PC-9 (cell line): ENCODE measurements at regions of chr18 and their contacts with region 1.

Region 1: GRCh38 chr18:26480897-26481895 is 67.2 kb downstream of the KCTD1 start:
- DNase-seq: peak; percentile 61 to 96
- H3K4me3 ChIP-seq: peak overlapping the region; percentile 36; the same call in 1 of the 2 replicates
- H3K27ac ChIP-seq: peak overlapping the region; percentile 99
- H3K4me1 ChIP-seq: peaks cover 97% of the 10 kb centered on the region
- H3K27me3 ChIP-seq: no peaks in the 10 kb centered on the region
- CTCF ChIP-seq: no peak

Region 2: DNA sequence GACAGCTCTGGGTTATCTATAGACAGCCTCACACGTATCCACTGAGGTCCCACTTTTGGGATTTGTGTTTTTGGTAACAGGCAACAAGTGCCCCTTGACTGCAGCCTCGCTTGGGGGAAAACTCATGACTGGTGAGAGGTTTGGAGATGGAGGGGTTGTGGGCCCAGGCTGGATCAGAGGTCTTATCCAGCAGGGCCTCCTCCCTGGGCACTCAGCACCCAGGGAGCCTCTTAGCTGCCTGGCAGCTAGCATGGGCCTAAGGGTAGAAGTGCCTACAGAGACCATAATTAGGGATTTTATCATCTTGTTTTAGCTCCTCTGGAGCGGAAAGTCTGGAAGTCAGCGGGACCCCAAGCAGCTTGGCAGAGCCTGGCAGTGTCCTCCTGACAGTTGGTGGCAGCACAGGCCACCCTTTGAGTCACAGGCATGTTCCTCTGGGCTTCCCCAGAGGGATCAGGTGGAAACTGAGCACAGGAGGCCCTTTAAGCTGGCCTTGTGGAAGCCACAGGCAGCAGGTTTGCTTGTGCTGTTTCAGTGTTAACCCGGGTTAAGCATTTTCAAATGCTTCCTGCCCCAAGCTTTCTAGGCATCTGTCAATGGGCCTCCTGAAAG is 75.9 kb before region 1 on chr18:
- CTCF ChIA-PET with region 1: no interaction called
- POLR2A ChIA-PET with region 1: no interaction called
- intact Hi-C with region 1: loop called (anchors 5 kb)
- DNase-seq: peak; percentile 32 to 51
- H3K4me3 ChIP-seq: no peak overlapping the region
- H3K27ac ChIP-seq: no peak overlapping the region
- H3K4me1 ChIP-seq: peaks cover 20% of the 10 kb centered on the region
- H3K27me3 ChIP-seq: no peaks in the 10 kb centered on the region
- CTCF ChIP-seq: peak; percentile 61

Region 3: DNA sequence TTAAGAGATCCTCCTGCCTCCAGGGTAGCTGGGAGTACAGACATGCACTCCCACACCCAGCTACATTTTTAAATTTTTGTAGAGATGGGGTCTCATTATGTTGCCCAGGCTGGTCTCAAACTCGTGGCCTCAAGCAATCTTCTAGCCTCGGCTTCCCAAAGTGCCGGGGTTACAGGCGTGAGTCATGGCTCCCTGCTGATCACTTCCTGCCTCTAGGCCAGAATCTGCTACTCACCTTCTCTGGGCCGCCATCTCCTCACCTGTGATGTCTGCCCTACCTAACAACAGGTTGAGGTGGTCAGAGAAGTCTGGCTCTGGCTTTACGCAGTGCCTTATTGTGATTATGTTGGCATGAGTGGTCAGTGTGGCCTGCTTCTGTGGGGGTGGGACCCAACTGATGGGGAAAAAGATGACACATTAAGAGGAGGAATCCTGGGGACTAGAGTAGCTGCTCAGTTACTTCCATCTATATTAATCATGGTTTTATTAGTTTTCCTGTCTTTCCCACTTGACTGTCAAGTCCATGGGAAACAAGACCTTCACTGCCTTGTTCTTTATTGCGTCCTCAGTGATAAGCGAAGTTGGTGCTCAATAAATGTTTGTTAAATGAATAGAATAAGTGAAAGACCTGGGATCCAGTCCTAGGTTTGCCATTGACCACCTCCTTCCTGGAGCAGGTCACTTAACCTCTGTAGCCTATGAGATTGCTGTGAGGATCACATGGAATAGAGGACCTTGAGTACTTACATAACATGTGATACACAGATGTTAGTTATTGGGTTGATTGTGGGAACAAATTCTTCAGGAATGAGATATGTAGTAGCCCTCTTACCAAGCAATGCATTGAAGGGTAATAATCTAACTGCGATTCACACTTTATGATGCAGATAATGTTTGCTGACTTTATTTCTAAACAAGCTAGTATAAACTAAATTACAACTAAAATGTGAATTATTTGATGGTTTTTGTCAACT is 51.5 kb after region 1 on chr18:
- CTCF ChIA-PET with region 1: interaction called, 4 read pairs
- POLR2A ChIA-PET with region 1: interaction called, 10 read pairs
- intact Hi-C with region 1: no loop called
- DNase-seq: no peak
- H3K4me3 ChIP-seq: no peak overlapping the region
- H3K27ac ChIP-seq: no peak overlapping the region
- H3K4me1 ChIP-seq: peaks cover 4% of the 10 kb centered on the region; the same call in 1 of the 2 replicates
- H3K27me3 ChIP-seq: no peaks in the 10 kb centered on the region
- CTCF ChIP-seq: no peak

Region 4: DNA sequence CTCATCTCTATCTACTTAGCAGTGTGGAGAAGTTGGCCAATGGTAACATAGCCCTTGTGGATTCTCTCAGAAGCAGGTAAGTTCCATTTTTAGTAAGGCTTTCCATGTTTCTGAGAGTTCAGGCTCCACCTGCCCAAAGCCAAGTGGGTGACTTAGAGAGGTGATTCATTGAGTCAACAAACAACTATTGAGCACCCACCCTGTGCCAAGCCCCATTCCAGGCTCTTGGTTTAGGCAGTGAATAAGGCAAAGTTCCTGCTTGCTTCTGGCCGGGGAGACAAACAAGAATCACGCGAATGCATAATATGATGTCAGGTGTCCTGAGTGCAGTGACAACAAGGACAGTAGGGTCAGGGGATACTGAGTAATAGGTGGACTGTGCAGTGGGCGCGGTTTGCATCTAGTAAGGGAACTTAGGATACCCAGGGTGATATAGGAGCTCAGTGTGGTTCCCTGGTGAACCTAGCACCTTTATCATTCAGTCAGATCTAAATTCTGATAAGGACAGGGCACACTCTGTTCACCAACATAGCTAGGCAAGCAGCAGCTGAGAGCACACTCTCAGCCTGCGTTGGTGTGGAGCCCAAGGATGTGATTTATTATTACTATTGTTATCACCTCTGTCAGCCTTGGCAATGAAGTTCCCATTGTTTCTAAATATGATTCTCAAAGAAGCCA is 98.9 kb after region 1 on chr18:
- CTCF ChIA-PET with region 1: no interaction called
- POLR2A ChIA-PET with region 1: interaction called, 3 read pairs
- intact Hi-C with region 1: loop called (anchors 2 kb)
- DNase-seq: peak; percentile 73 to 94
- H3K4me3 ChIP-seq: no peak overlapping the region; the same call in 1 of the 2 replicates
- H3K27ac ChIP-seq: peak overlapping the region; percentile 78
- H3K4me1 ChIP-seq: peaks cover 26% of the 10 kb centered on the region
- H3K27me3 ChIP-seq: no peaks in the 10 kb centered on the region
- CTCF ChIP-seq: no peak

Region 5: DNA sequence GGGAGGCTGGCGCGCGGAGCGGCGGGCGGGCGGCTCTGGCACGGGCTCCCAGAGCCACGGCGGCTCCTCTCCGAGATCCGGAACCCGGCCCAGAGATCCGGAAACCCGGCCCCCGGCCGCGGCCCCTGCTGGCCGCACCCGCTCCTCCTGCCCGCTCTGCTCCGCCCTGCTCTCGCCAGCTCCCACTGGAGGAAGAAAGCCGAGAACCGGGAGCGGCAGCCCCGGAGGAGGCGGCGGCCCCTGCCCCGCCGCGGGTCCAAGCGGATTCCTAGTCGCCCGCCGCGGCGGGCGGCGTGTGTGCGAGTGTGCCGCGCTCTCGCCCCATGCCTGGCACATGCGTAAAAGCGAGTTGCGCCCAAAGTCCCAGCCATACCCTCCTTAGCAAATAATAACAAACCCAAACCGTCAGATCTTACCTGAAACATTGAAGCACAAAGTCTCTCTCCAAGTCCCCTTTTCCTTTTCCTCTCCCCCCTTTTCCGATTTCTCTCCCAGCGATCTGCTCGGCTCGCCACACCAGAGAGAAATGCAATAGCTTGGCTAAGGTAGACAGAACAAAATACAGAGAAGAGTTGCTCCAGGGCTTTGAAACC is 175.8 kb after region 1 on chr18:
- CTCF ChIA-PET with region 1: no interaction called
- POLR2A ChIA-PET with region 1: no interaction called
- intact Hi-C with region 1: loop called (anchors 5 kb)
- DNase-seq: peak in 1 of 2 experiments; percentile 62
- H3K4me3 ChIP-seq: peak overlapping the region; percentile 70
- H3K27ac ChIP-seq: peak overlapping the region; percentile 52
- H3K4me1 ChIP-seq: peaks cover 16% of the 10 kb centered on the region
- H3K27me3 ChIP-seq: no peaks in the 10 kb centered on the region
- CTCF ChIP-seq: no peak